GM12878 (cell line): ENCODE measurements at regions of chr1 and their contacts with region 1.

Region 1: GRCh38 chr1:58783993-58784757 is at the start of gene JUN:
- DNase-seq: peak; percentile 97
- ATAC-seq: peak; percentile 84
- H3K4me3 ChIP-seq: peak within 1 kb of the TSS; percentile 86
- H3K27ac ChIP-seq: peak within 1 kb of the TSS; percentile 90
- H3K4me1 ChIP-seq: peaks cover 11% of the 10 kb centered on the region
- H3K27me3 ChIP-seq: no peaks in the 10 kb centered on the region
- CTCF ChIP-seq: 0 out of 6 replicates have a peak, but pooled peaks of 1 of the 3 experiments have one; percentile 1
- EP300 ChIP-seq: peak in 1 of 2 experiments; percentile 62; a peak in 2 of 4 replicates
- POLR2A ChIP-seq: peak; percentile 99
- RAD21 ChIP-seq: no peak
- polyA plus RNA-seq, gene JUN: 0.18 to 0.37 TPM

Region 2: DNA sequence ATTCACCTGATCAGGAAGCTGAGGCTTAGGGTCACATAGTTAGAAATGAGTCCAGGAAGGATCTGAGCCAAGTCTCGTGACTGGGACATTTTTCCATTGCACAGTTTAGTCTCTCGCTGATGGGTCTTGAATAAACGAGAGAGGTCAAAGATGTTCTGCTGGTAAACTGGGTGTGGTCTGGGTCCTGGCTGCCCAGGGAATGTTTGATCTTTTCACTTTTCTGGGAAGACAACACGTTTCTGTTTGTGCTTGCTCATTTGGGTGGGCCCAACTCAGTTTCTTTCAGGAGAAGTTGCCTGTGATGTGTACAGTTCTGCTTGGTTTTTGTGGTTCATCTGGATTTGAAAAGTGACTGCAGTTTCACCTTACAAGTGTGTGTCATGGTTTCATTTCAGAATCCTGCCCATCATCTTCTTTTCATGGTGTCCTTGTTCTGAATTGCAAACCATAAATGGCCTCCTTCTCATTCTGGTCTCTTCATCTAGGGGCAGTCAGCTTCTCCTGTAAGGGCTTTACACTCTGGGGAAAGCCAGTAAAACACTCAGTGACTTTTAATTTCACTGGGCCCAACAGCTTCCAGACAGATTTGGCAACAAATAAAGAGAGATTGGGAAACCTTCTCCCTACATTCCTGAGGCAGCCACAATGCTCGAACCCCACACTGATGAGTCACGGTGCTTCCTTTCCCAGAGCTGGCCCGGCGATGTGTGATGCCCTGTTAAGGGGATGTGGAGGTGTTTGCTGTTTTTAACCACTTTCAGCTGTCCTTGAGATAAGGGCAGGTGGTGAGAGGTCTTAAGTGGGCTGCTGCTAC is 199.9 kb before region 1 on chr1:
- CTCF ChIA-PET with region 1: no interaction called
- POLR2A ChIA-PET with region 1: no interaction called
- RAD21 ChIA-PET with region 1: no interaction called
- SMC1A ChIA-PET with region 1: no interaction called
- in situ Hi-C with region 1: no loop called
- intact Hi-C with region 1: no loop called
- DNase-seq: no peak
- ATAC-seq: peak; percentile 86
- H3K4me3 ChIP-seq: 0 out of 2 replicates have a peak overlapping the region, but pooled peaks have one; percentile 35
- H3K27ac ChIP-seq: peak overlapping the region; percentile 51
- H3K4me1 ChIP-seq: peaks cover 21% of the 10 kb centered on the region
- H3K27me3 ChIP-seq: no peaks in the 10 kb centered on the region
- CTCF ChIP-seq: no peak
- EP300 ChIP-seq: no peak
- POLR2A ChIP-seq: no peak
- RAD21 ChIP-seq: no peak

Region 3: DNA sequence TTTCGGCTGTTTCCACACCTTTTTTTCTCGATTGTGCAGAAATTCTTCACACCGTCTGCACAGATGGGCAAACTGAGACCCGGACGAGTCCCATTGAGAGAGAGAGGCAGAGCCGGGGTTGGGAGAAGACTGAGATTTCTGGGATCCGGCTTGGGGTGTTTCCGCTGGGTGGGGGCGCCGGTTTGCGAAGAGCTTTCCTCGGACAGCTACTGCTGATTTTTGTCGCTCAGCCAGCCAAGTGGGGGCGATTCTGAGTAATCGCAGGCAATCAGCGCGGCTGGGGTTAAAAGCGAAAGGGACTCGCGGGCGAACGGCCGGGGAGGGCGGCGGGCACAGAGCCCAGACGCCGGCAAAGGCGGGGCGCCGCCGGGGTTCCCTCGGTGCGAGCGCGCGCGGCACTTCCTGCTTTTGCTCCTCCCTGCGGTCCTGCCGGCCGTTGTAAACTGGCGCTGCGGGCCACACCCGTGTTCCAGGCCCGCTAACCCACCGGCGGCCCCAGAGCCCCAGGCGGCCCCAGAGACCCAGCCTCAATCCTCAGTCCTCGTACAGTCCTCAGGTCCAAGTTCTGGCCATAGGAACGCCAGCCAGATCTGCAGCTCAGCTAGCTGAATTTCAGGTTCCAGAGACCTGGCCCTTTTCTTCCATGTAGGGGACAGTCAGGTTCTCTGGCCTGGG is 32.0 kb after region 1 on chr1:
- CTCF ChIA-PET with region 1: interaction called, 9 read pairs
- POLR2A ChIA-PET with region 1: no interaction called
- RAD21 ChIA-PET with region 1: interaction called, 6 read pairs
- SMC1A ChIA-PET with region 1: interaction called, 4 read pairs
- in situ Hi-C with region 1: no loop called
- intact Hi-C with region 1: loop called (anchors 1 kb)
- DNase-seq: peak; percentile 53
- ATAC-seq: peak; percentile 95
- H3K4me3 ChIP-seq: peak overlapping the region; percentile 88
- H3K27ac ChIP-seq: peak overlapping the region; percentile 73
- H3K4me1 ChIP-seq: peaks cover 13% of the 10 kb centered on the region
- H3K27me3 ChIP-seq: no peaks in the 10 kb centered on the region
- CTCF ChIP-seq: peak; percentile 22 to 44 (median 24); a peak in 3 of 6 replicates
- EP300 ChIP-seq: no peak
- POLR2A ChIP-seq: peak; percentile 86
- RAD21 ChIP-seq: peak; percentile 45

Region 4: GRCh38 chr1:58903514-58904298 is 119.5 kb after region 1 on chr1:
- CTCF ChIA-PET with region 1: interaction called, 5 read pairs
- POLR2A ChIA-PET with region 1: no interaction called
- RAD21 ChIA-PET with region 1: interaction called, 6 read pairs
- SMC1A ChIA-PET with region 1: interaction called, 3 read pairs
- in situ Hi-C with region 1: no loop called
- intact Hi-C with region 1: loop called (anchors 2 kb)
- DNase-seq: peak; percentile 59
- ATAC-seq: peak; percentile 96
- H3K4me3 ChIP-seq: peak overlapping the region; percentile 58; the same call in 1 of the 2 replicates
- H3K27ac ChIP-seq: peak overlapping the region; percentile 60
- H3K4me1 ChIP-seq: peaks cover 9% of the 10 kb centered on the region; the same call in 1 of the 2 replicates
- H3K27me3 ChIP-seq: no peaks in the 10 kb centered on the region
- CTCF ChIP-seq: no peak
- EP300 ChIP-seq: no peak
- POLR2A ChIP-seq: peak; percentile 81
- RAD21 ChIP-seq: no peak

Region 5: GRCh38 chr1:59007820-59008598 is 223.8 kb after region 1 on chr1:
- CTCF ChIA-PET with region 1: no interaction called
- POLR2A ChIA-PET with region 1: interaction called, 3 read pairs
- RAD21 ChIA-PET with region 1: interaction called, 12 read pairs
- SMC1A ChIA-PET with region 1: interaction called, 11 read pairs
- in situ Hi-C with region 1: no loop called
- intact Hi-C with region 1: loop called (anchors 5 kb)
- DNase-seq: no peak
- ATAC-seq: peak; percentile 71
- H3K4me3 ChIP-seq: peak overlapping the region; percentile 9; the same call in 1 of the 2 replicates
- H3K27ac ChIP-seq: peak overlapping the region; percentile 15
- H3K4me1 ChIP-seq: peaks cover 55% of the 10 kb centered on the region
- H3K27me3 ChIP-seq: no peaks in the 10 kb centered on the region
- CTCF ChIP-seq: no peak
- EP300 ChIP-seq: peak; percentile 14 to 63; a peak in 3 of 4 replicates
- POLR2A ChIP-seq: no peak
- RAD21 ChIP-seq: no peak

Region 6: GRCh38 chr1:59025898-59026426 is 241.8 kb after region 1 on chr1:
- CTCF ChIA-PET with region 1: interaction called, 4 read pairs
- POLR2A ChIA-PET with region 1: interaction called, 5 read pairs
- RAD21 ChIA-PET with region 1: interaction called, 5 read pairs
- SMC1A ChIA-PET with region 1: interaction called, 6 read pairs
- in situ Hi-C with region 1: no loop called
- intact Hi-C with region 1: loop called (anchors 5 kb)
- DNase-seq: peak; percentile 85
- ATAC-seq: peak; percentile 85
- H3K4me3 ChIP-seq: 0 out of 2 replicates have a peak overlapping the region, but pooled peaks have one; percentile 9
- H3K27ac ChIP-seq: peak overlapping the region; percentile 84
- H3K4me1 ChIP-seq: peaks cover 21% of the 10 kb centered on the region
- H3K27me3 ChIP-seq: no peaks in the 10 kb centered on the region
- CTCF ChIP-seq: no peak
- EP300 ChIP-seq: no peak
- POLR2A ChIP-seq: no peak
- RAD21 ChIP-seq: 0 out of 2 replicates have a peak, but pooled peaks have one; percentile 13

Region 7: GRCh38 chr1:59296358-59297256 is 512.4 kb after region 1 on chr1 and contains the start of gene FGGY:
- CTCF ChIA-PET with region 1: interaction called, 3 read pairs
- POLR2A ChIA-PET with region 1: no interaction called
- RAD21 ChIA-PET with region 1: interaction called, 5 read pairs
- SMC1A ChIA-PET with region 1: interaction called, 3 read pairs
- in situ Hi-C with region 1: loop called (anchors 10 kb)
- intact Hi-C with region 1: loop called (anchors 2 kb)
- DNase-seq: peak; percentile 89
- ATAC-seq: peak; percentile 97
- H3K4me3 ChIP-seq: peak within 1 kb of the TSS; percentile 92
- H3K27ac ChIP-seq: peak within 1 kb of the TSS; percentile 80
- H3K4me1 ChIP-seq: peaks cover 3% of the 10 kb centered on the region; the same call in 1 of the 2 replicates
- H3K27me3 ChIP-seq: no peaks in the 10 kb centered on the region
- CTCF ChIP-seq: no peak
- EP300 ChIP-seq: no peak
- POLR2A ChIP-seq: peak; percentile 89
- RAD21 ChIP-seq: 0 out of 2 replicates have a peak, but pooled peaks have one; percentile 10
- polyA plus RNA-seq, gene FGGY: 9.1 to 9.5 TPM